ENCODE measurements at regions of chr11 and their contacts with region 1.

Region 1: GRCh38 chr11:6531267-6531752 is 34.2 kb downstream of the DNHD1 start:
- DNase-seq: peak; percentile 29
- H3K4me3 Mint-ChIP-seq: no peak overlapping the region
- H3K27ac Mint-ChIP-seq: no peak overlapping the region
- H3K4me1 Mint-ChIP-seq: peaks cover 10% of the 10 kb centered on the region
- H3K27me3 Mint-ChIP-seq: no peaks in the 10 kb centered on the region

Region 2: DNA sequence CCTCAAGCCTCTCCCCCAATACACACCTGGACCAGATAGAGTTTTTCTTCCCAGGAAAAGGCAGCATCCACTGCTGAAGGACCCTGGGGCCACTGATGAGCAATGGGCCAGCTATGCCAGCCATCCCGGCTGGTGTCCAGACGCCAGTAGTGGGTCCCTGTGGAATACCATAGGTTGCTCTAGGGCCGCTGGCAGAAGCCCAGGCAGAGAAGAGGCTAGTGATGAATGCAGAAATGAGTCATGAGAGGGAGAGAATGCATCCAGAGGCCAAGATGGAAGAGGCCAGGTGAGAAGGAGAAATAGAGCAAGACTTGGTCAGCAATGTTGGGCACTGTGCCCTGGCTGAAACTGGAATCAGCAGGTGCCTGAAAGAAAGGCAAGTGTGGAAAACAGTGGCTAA is 99.4 kb before region 1 on chr11:
- CTCF ChIA-PET with region 1: no interaction called
- POLR2A ChIA-PET with region 1: no interaction called
- DNase-seq: no peak
- H3K4me3 Mint-ChIP-seq: no peak overlapping the region
- H3K27ac Mint-ChIP-seq: no peak overlapping the region
- H3K4me1 Mint-ChIP-seq: peaks cover 4% of the 10 kb centered on the region
- H3K27me3 Mint-ChIP-seq: peaks cover 8% of the 10 kb centered on the region

Region 3: GRCh38 chr11:6541356-6541755 is 10.0 kb after region 1 on chr11:
- CTCF ChIA-PET with region 1: interaction called, 17 read pairs
- POLR2A ChIA-PET with region 1: no interaction called
- DNase-seq: no peak
- H3K4me3 Mint-ChIP-seq: no peak overlapping the region
- H3K27ac Mint-ChIP-seq: no peak overlapping the region
- H3K4me1 Mint-ChIP-seq: peaks cover 9% of the 10 kb centered on the region
- H3K27me3 Mint-ChIP-seq: no peaks in the 10 kb centered on the region

Region 4: DNA sequence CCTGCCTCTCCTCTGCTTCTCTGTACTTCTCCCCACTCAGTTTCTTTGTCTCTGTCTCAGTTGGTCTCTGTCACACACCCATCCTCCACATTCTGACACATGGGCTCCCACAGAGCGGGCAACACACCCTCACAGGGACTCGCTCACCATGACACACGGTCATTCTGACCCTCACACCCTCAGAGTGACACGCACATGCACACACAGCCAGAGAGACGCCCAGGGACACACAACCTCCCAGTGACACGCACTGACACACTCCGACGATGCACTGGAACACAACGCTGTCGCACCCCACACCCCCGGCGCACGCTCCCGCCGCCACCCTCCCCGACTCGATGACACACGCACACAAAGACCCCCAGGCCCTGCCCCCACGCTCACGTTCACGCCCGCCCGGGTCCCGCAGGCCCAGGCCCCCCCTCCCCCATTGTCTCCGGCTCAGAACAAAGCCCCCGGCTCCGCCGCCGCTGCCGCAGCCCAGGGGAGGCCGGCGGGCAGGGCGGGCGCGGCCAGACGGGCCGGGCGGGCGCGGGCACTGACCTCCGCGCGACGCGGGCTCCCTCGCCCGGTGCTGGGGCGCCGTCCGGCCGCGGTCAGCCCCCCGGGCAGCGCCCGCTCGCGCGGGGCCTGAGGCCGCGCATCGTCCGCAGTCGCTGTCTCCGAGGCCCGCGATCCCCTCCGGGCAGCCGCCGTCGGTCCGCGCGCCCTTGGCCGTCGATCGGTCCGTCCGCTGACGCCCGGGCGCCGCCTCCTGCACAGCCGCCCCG is 123.9 kb after region 1 on chr11:
- CTCF ChIA-PET with region 1: no interaction called
- POLR2A ChIA-PET with region 1: no interaction called
- DNase-seq: no peak
- H3K4me3 Mint-ChIP-seq: no peak overlapping the region
- H3K27ac Mint-ChIP-seq: no peak overlapping the region
- H3K4me1 Mint-ChIP-seq: peaks cover 3% of the 10 kb centered on the region
- H3K27me3 Mint-ChIP-seq: peaks cover 18% of the 10 kb centered on the region

Measured in activated CD4-positive, alpha-beta memory T cell treated with anti-CD3 and anti-CD28 coated beads, Interleukin-2, amount 10 ng/mL, durations not matched to agents 7 days and 5 days (primary cell).